Ascending aorta (tissue), 2 donors: ENCODE measurements at regions of chr12 and their contacts with region 1.

Region 1: GRCh38 chr12:7859552-7859951 is 13.2 kb downstream of the SLC2A14 start:
- DNase-seq: no peak
- H3K4me3 ChIP-seq: no peak overlapping the region
- H3K27ac ChIP-seq: no peak overlapping the region
- H3K4me1 ChIP-seq: no peaks in the 10 kb centered on the region
- H3K27me3 ChIP-seq: no peaks in the 10 kb centered on the region
- CTCF ChIP-seq: no peak

Region 2: GRCh38 chr12:7229741-7230140 is 629.8 kb before region 1 on chr12:
- intact Hi-C with region 1: no loop called
- DNase-seq: no peak
- H3K4me3 ChIP-seq: no peak overlapping the region
- H3K27ac ChIP-seq: no peak overlapping the region
- H3K4me1 ChIP-seq: no peaks in the 10 kb centered on the region
- H3K27me3 ChIP-seq: no peaks in the 10 kb centered on the region
- CTCF ChIP-seq: no peak

Region 3: DNA sequence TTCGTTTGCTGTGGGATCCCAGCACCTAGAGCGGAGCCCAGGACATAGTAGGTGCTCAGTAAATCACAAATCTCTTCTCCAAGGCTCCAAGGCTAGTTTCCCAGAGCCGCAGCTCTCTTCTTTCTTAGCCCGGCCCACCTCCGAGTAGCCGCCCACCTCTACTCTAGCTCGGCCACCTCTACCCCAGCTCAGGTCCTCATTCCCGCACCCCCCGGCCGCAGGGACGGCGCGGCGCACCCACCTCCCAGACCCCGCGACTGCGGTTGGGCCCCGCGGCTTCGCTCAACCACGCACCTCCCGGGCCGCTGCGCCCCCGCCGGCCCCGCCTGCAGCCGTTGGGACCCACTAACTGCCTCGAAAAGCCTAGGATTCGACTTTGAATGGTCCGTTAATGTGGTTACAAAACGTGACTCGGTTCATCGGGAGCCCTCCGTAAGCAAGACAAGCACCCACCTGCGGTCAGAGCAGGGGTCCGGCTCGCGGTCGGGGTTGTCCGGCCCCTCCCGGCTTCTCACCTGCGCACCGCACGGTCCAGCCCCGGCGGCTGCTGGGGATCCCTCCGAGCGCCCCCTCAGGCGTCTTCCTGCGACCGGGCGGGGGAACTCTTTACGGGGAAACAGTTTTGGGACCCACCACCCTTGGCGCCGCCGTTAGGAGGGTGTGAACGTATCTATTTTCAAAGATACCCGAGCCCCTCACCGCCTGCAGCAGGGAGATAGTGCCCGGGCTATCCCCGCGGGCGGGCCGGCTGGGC is 13.2 kb after region 1 on chr12 and contains the start of gene SLC2A14:
- intact Hi-C with region 1: no loop called
- DNase-seq: no peak
- H3K4me3 ChIP-seq: peak within 1 kb of the TSS in 1 of 2 donors; percentile 22
- H3K27ac ChIP-seq: no peak within 1 kb of the TSS
- H3K4me1 ChIP-seq: no peaks in the 10 kb centered on the region
- H3K27me3 ChIP-seq: peaks cover 10% of the 10 kb centered on the region
- CTCF ChIP-seq: no peak
- total RNA-seq, gene SLC2A14: not detected

Region 4: GRCh38 chr12:7995266-7995963 is 135.9 kb after region 1 on chr12:
- intact Hi-C with region 1: loop called (anchors 2 kb)
- DNase-seq: peak; percentile 60 to 89
- H3K4me3 ChIP-seq: no peak overlapping the region
- H3K27ac ChIP-seq: no peak overlapping the region
- H3K4me1 ChIP-seq: no peaks in the 10 kb centered on the region
- H3K27me3 ChIP-seq: no peaks in the 10 kb centered on the region
- CTCF ChIP-seq: peak; percentile 62 to 84 (median 74)